ENCODE measurements at regions of chr4 and their contacts with region 1.

Region 1: GRCh38 chr4:1712216-1713002 is at the start of gene SLBP:
- DNase-seq: peak; percentile 99
- ATAC-seq: peak; percentile 89
- H3K4me3 Mint-ChIP-seq: peak within 1 kb of the TSS; percentile 100
- H3K27ac Mint-ChIP-seq: peak within 1 kb of the TSS; percentile 99
- H3K4me1 Mint-ChIP-seq: peaks cover 62% of the 10 kb centered on the region
- H3K27me3 Mint-ChIP-seq: no peaks in the 10 kb centered on the region
- total RNA-seq, gene SLBP: 133 to 137 TPM

Region 2: GRCh38 chr4:1629699-1630083 is 82.7 kb before region 1 on chr4:
- CTCF ChIA-PET with region 1: no interaction called
- DNase-seq: no peak
- ATAC-seq: no peak
- H3K4me3 Mint-ChIP-seq: no peak overlapping the region
- H3K27ac Mint-ChIP-seq: no peak overlapping the region
- H3K4me1 Mint-ChIP-seq: no peaks in the 10 kb centered on the region
- H3K27me3 Mint-ChIP-seq: no peaks in the 10 kb centered on the region

Region 3: DNA sequence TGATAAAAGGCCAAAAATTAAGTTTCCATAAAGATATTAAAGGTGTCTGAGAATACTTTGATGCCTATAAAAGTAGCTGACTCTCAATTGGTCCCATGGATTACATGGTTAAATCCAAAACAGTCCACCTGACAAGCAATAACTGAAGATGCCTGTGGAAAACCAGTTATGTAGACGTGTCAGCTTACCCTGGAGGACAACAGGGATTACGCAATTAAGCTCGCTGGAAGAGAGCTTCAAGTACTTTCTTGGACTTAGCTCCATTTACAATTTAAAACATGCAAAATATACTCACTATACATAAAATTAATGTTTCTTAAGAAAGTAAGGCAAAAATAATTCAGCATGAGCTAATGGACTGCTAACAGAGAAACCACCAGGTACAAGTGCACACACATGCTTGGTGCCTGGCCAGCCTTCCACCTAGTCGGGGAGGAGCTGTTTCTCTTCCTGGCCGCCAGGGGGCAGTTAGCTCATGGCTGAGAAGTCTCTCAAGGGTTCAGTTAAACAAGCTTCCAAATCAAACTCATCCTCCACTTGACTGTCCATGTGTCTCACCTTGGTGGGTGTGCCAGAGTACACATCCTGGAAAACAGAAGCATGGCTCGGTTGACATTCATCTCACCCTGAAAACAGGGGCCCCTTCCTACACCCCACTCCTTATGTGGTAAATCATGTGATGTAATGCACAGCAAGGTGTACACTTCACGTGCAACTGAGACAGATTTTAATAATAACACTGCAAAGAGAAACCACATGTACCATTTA is 19.1 kb before region 1 on chr4:
- CTCF ChIA-PET with region 1: interaction called, 278 read pairs
- DNase-seq: peak; percentile 82
- ATAC-seq: peak; percentile 93
- H3K4me3 Mint-ChIP-seq: no peak overlapping the region
- H3K27ac Mint-ChIP-seq: peak overlapping the region; percentile 74
- H3K4me1 Mint-ChIP-seq: peaks cover 4% of the 10 kb centered on the region
- H3K27me3 Mint-ChIP-seq: no peaks in the 10 kb centered on the region

Region 4: DNA sequence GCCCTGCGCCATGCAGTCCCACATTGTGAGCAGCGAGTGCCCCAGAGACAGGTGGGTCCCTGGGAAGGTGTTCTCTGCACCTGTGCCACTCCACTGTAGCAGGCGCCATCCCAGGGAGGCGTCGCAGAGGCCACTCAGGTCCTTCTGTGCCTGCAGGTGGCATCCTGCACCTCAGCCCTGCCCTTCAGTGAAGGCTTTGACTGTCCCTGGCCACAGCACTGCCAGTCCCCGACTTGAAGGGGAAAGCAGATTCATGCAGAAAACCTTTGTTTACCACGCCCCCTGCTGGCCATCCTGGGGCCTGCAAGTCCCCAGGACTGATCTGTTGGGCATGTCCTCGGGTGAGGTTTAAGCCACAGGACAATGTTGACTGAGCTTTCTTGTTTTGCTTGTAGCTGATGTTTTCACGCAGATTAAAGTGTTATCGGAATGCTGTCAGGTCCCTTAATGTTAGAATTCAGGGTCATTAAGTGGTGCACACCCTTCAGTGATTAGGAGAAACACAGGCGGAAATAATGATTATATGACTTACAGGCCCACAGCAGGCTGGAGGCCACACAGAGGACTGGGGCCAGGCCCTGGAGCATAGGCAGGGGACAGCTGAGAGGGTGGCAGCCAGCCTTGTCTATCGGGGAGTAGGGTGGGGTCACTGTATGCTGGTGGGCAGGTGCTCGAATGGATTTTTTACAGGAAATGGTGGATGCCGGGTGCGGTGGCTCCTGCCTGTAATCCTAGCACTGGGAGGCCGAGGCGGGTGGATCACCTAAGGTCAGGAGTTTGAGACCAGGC is 13.9 kb after region 1 on chr4:
- CTCF ChIA-PET with region 1: interaction called, 39 read pairs
- DNase-seq: peak; percentile 92
- ATAC-seq: peak; percentile 26
- H3K4me3 Mint-ChIP-seq: no peak overlapping the region
- H3K27ac Mint-ChIP-seq: peak overlapping the region; percentile 74
- H3K4me1 Mint-ChIP-seq: peaks cover 69% of the 10 kb centered on the region
- H3K27me3 Mint-ChIP-seq: no peaks in the 10 kb centered on the region

Region 5: GRCh38 chr4:1872870-1873269 is 160.5 kb after region 1 on chr4:
- CTCF ChIA-PET with region 1: no interaction called
- DNase-seq: peak; percentile 71
- ATAC-seq: peak; percentile 13
- H3K4me3 Mint-ChIP-seq: peak overlapping the region; percentile 100
- H3K27ac Mint-ChIP-seq: peak overlapping the region; percentile 99
- H3K4me1 Mint-ChIP-seq: peaks cover 51% of the 10 kb centered on the region
- H3K27me3 Mint-ChIP-seq: no peaks in the 10 kb centered on the region